CD14-positive monocyte (primary cell): ENCODE measurements at regions of chr16 and their contacts with region 1.

Region 1: GRCh38 chr16:3400779-3401688 is at the starts of genes ZNF174 and ZSCAN32:
- DNase-seq: peak; percentile 98 to 99 (median 98)
- H3K4me3 ChIP-seq: peak within 1 kb of the TSS; percentile 72 to 90 (median 86)
- H3K4me3 Mint-ChIP-seq: peak within 1 kb of the TSS; percentile 85 to 96
- H3K27ac ChIP-seq: peak within 1 kb of the TSS; percentile 39 to 80
- H3K27ac Mint-ChIP-seq: peak within 1 kb of the TSS; percentile 79 to 89 (median 82)
- H3K4me1 ChIP-seq: peaks cover 19 to 30% of the 10 kb centered on the region in 2 donors
- H3K4me1 Mint-ChIP-seq: peaks cover 25% of the 10 kb centered on the region
- H3K27me3 ChIP-seq: no peaks in the 10 kb centered on the region
- H3K27me3 Mint-ChIP-seq: peaks cover 0 to 2% (median 0%) of the 10 kb centered on the region in 3 donors
- CTCF ChIP-seq: no peak
- polyA plus RNA-seq, gene ZNF174: 2.5 to 5.6 (median 4.9) TPM
- polyA plus RNA-seq, gene ZSCAN32: 5.7 to 7.7 (median 7.2) TPM

Region 2: GRCh38 chr16:2980227-2981086 is 420.6 kb before region 1 on chr16 and contains the start of gene PKMYT1:
- intact Hi-C with region 1: no loop called
- DNase-seq: peak; percentile 82 to 86 (median 85)
- H3K4me3 ChIP-seq: peak within 1 kb of the TSS; percentile 65 to 92 (median 86)
- H3K4me3 Mint-ChIP-seq: peak within 1 kb of the TSS; percentile 81 to 85
- H3K27ac ChIP-seq: peak within 1 kb of the TSS; percentile 48 to 74
- H3K27ac Mint-ChIP-seq: peak within 1 kb of the TSS; percentile 71 to 90 (median 85)
- H3K4me1 ChIP-seq: peaks cover 22 to 29% of the 10 kb centered on the region in 2 donors
- H3K4me1 Mint-ChIP-seq: peaks cover 28% of the 10 kb centered on the region
- H3K27me3 ChIP-seq: no peaks in the 10 kb centered on the region
- H3K27me3 Mint-ChIP-seq: peaks cover 3 to 9% (median 4%) of the 10 kb centered on the region in 3 donors
- CTCF ChIP-seq: no peak
- polyA plus RNA-seq, gene PKMYT1: 0.39 to 3.2 (median 3.0) TPM

Region 3: DNA sequence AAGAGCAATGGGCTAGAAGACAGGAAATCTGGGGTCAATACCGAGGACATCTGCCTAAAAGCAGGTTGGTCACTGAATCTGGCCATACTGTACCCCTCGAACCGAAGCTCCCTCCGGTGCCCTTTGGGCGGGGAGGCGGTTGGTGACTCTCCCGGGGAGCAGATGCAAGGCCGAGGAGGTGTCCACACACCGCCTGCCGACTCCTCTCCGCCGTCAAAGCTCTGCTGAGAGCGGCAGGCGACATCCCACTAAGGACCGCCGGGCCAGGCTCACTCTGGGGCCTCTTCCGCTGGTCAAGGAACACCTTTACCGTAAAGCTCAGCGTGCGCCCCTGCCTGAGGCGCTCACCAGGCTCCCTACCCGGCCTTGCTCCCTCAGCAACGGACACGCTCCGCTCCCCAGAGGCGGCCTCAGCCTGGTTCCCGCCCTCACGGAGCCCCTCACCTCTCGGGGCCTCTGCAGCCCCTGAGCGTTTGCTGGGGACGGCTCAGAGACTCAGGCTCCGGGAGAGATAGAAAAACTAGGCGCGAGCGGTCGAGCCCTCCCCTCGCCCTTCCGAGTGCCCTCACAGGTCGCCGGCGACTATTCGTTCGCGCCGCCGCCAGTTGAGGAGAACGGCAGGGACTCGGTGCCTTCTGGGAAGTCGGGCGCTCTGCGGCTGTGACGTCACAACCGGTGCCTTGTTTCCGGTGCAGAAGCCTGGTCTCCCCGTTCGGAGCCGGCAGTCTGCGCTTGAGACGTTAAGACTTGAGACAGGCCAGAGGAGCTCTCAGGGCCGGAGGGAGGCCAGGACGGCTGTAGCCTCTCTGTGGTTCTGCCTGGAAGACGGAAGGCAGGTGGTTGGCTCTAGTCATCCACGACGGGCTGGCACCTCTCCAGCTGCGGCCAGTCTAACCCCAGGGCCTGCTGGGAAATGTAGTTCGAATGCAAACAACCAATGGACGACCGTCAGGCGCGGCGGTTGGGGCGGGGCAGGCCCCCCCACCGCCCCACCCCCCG is 166.2 kb before region 1 on chr16 and contains the start of gene ZNF200:
- intact Hi-C with region 1: loop called in 1 of 2 experiments (anchors 5 kb)
- DNase-seq: peak; percentile 88 to 91 (median 91)
- H3K4me3 ChIP-seq: peak within 1 kb of the TSS; percentile 73 to 97 (median 75)
- H3K4me3 Mint-ChIP-seq: peak within 1 kb of the TSS; percentile 91 to 96
- H3K27ac ChIP-seq: peak within 1 kb of the TSS; percentile 86 to 97
- H3K27ac Mint-ChIP-seq: peak within 1 kb of the TSS; percentile 97 to 99 (median 99)
- H3K4me1 ChIP-seq: peaks cover 12 to 13% of the 10 kb centered on the region in 2 donors
- H3K4me1 Mint-ChIP-seq: peaks cover 18% of the 10 kb centered on the region
- H3K27me3 ChIP-seq: no peaks in the 10 kb centered on the region
- H3K27me3 Mint-ChIP-seq: peaks cover 0 to 2% (median 1%) of the 10 kb centered on the region in 3 donors
- CTCF ChIP-seq: no peak
- polyA plus RNA-seq, gene ZNF200: 2.0 to 2.8 (median 2.5) TPM

Region 4: GRCh38 chr16:3305109-3306068 is 95.6 kb before region 1 on chr16 and contains the starts of genes TIGD7 and ZNF75A:
- intact Hi-C with region 1: loop called in 1 of 2 experiments (anchors 5 kb)
- DNase-seq: peak; percentile 86 to 87 (median 86)
- H3K4me3 ChIP-seq: peak within 1 kb of the TSS; percentile 67 to 78 (median 76)
- H3K4me3 Mint-ChIP-seq: peak within 1 kb of the TSS; percentile 79 to 86
- H3K27ac ChIP-seq: peak within 1 kb of the TSS; percentile 86 to 90
- H3K27ac Mint-ChIP-seq: peak within 1 kb of the TSS; percentile 80 to 93 (median 89)
- H3K4me1 ChIP-seq: peaks cover 12 to 22% of the 10 kb centered on the region in 2 donors
- H3K4me1 Mint-ChIP-seq: peaks cover 13% of the 10 kb centered on the region
- H3K27me3 ChIP-seq: no peaks in the 10 kb centered on the region
- H3K27me3 Mint-ChIP-seq: peaks cover 0 to 7% (median 3%) of the 10 kb centered on the region in 3 donors
- CTCF ChIP-seq: no peak
- polyA plus RNA-seq, gene TIGD7: 0.32 to 1.4 (median 0.64) TPM
- polyA plus RNA-seq, gene ZNF75A: 2.3 to 10.2 (median 2.8) TPM

Region 5: DNA sequence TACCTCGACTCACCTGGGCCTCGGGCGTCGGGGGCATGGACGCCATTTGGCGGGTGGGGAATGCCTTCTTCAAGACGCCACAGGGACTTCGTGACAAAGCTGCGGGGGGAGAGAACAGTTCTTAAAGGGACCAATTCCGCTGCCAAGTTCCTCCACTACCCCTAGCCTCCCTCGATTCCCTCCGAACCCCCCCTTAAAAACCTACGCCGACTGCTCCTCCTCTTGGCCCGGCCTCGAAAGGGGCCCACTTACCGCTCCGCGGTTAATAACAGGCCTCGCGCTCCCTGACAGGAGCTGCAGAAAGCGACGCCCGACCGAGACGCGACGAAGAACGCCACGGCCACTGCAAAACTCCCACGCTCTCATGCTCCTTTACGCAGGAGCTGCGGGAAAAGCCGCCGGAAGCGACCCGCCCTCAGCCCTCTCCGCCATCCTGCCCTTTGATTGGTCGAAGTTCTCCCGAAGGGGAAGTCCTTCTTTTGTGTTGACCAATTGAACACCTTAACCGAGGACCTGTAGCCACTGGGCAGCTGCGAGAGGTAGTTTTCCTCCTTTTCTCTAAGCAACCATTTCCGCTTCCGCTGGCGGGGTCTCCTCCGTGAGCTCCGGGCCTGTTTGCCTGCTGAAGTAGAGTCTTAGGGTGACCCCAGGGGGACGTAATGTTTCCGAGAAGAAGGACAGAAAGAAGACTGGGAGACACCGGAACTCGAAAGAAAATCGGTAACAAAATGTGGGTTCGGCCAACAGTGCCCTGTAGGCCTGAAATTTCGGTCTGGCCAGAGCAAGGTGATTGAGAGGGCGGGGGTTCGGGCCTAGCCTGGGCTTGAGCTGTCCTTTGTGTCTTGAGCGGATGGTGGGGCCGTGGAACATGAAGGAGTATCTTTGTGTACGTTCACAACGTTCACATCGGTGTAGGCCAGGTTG is 42.3 kb after region 1 on chr16 and contains the starts of genes NAA60 and ZNF597:
- intact Hi-C with region 1: loop called (anchors 5 kb)
- DNase-seq: peak; percentile 81 to 89 (median 87)
- H3K4me3 ChIP-seq: peak within 1 kb of the TSS; percentile 45 to 82 (median 76)
- H3K4me3 Mint-ChIP-seq: peak within 1 kb of the TSS; percentile 96 to 98
- H3K27ac ChIP-seq: peak within 1 kb of the TSS; percentile 68 to 79
- H3K27ac Mint-ChIP-seq: peak within 1 kb of the TSS; percentile 84 to 99 (median 94)
- H3K4me1 ChIP-seq: peaks cover 11 to 19% of the 10 kb centered on the region in 2 donors
- H3K4me1 Mint-ChIP-seq: peaks cover 11% of the 10 kb centered on the region
- H3K27me3 ChIP-seq: no peaks in the 10 kb centered on the region
- H3K27me3 Mint-ChIP-seq: peaks cover 3 to 9% (median 5%) of the 10 kb centered on the region in 3 donors
- CTCF ChIP-seq: no peak
- polyA plus RNA-seq, gene NAA60: 19.5 to 48.8 (median 29.7) TPM
- polyA plus RNA-seq, gene ZNF597: 0.80 to 1.0 (median 0.98) TPM

Region 6: DNA sequence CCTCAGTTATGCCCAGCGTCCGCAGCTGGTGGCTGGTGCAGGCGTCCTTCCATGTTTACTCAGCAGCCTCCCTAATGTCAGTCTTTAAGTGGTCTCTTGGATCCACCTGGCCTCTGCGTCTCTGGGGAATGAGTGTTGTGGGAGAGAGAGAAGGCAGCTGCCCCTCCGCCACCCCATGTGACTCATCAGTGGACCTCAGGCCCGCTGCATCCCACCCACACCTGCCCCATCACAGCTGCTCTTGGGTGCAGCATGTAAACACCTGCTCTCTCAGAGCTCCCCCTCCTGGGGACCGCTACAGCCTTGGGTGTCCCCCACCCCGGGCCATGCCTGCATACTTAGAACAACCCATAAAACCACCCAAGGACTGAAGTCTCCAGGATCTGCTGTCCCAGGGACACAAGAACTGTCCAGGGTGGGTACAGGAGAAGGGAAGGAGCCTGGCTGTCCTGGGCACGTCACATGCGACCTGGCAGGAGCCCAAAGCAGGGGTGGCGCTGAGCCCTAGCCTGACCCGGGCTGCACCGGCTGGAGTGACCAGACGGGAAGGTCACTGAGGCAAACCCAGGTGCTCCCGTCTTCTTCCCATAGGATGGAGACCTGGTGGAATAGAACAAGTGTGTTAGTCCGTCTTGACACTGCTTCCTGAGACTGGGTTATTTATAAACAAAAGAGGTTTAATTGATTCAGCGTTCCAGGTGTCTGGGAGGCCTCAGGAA is 90.0 kb after region 1 on chr16:
- intact Hi-C with region 1: no loop called
- DNase-seq: no peak
- H3K4me3 ChIP-seq: no peak overlapping the region
- H3K4me3 Mint-ChIP-seq: no peak overlapping the region
- H3K27ac ChIP-seq: no peak overlapping the region
- H3K27ac Mint-ChIP-seq: peak overlapping the region in 1 of 7 donors; percentile 88
- H3K4me1 ChIP-seq: no peaks in the 10 kb centered on the region
- H3K4me1 Mint-ChIP-seq: no peaks in the 10 kb centered on the region
- H3K27me3 ChIP-seq: no peaks in the 10 kb centered on the region
- H3K27me3 Mint-ChIP-seq: peaks cover 0 to 6% (median 0%) of the 10 kb centered on the region in 3 donors
- CTCF ChIP-seq: no peak